CD8-positive, alpha-beta T cell (primary cell): ENCODE measurements at regions of chr12 and their contacts with region 1.

Region 1: DNA sequence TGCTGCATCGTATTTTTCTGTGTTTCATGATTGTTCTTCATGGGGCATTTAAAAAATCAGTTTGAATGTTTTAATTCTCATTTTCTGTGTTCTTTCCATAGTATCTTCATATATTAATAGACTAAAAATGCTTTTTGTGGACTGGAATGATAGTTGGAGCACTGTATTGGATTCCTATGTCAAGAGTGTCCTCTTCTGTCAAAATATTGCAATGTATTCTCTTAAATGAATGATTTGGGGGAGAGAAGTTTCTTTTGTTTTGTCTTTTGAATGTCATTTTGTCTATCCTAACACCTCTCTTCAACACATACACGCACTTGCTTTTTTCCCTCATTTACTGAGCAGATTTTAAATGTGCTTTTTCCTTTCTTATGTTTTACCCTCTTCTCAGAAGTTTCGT is 4.7 kb upstream of the EIF2S3B start:
- DNase-seq: peak in 2 of 9 experiments; percentile 36 to 59
- ATAC-seq: no peak
- H3K4me3 ChIP-seq: no peak overlapping the region
- H3K4me3 Mint-ChIP-seq: peak overlapping the region; percentile 57
- H3K27ac ChIP-seq: no peak overlapping the region
- H3K27ac Mint-ChIP-seq: peak overlapping the region; percentile 82
- H3K4me1 ChIP-seq: peaks cover 56% of the 10 kb centered on the region
- H3K4me1 Mint-ChIP-seq: peaks cover 51% of the 10 kb centered on the region
- H3K27me3 ChIP-seq: no peaks in the 10 kb centered on the region
- H3K27me3 Mint-ChIP-seq: no peaks in the 10 kb centered on the region
- CTCF ChIP-seq: no peak

Region 2: DNA sequence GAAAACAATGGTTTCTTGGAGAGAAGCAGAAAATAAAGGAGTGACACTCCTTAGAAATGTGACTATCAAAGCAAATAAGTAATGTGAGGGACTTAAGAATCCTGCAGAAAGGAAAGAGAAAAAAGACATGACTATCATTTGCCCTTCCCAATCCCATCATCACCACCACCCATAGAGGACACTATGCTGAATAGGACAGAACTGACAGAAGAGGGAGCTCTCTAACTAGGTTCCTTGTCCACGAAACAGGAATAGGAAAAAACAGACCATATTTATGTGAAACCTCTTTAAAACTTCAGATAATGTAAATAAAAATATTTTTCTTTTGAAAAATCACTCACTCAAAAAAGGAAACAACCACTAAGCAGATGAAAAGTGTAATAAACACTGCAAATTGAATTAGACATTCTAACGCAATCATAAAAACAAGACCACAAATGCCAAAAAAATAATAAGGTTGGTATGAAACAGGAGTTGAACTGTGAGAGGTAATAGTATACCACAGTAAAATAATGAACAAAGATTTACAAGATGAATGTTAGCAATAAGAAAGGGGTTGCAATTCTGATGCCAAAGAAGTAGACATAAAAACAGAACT is 169.3 kb before region 1 on chr12:
- CTCF ChIA-PET with region 1: interaction called, 4 read pairs
- POLR2A ChIA-PET with region 1: no interaction called
- intact Hi-C with region 1: loop called in 1 of 2 experiments (anchors 1 kb)
- DNase-seq: peak in 3 of 9 experiments; percentile 8 to 77 (median 63)
- ATAC-seq: no peak
- H3K4me3 ChIP-seq: no peak overlapping the region
- H3K4me3 Mint-ChIP-seq: peak overlapping the region; percentile 26
- H3K27ac ChIP-seq: no peak overlapping the region
- H3K27ac Mint-ChIP-seq: no peak overlapping the region
- H3K4me1 ChIP-seq: peaks cover 6% of the 10 kb centered on the region
- H3K4me1 Mint-ChIP-seq: peaks cover 10% of the 10 kb centered on the region
- H3K27me3 ChIP-seq: no peaks in the 10 kb centered on the region
- H3K27me3 Mint-ChIP-seq: no peaks in the 10 kb centered on the region
- CTCF ChIP-seq: peak; percentile 51

Region 3: DNA sequence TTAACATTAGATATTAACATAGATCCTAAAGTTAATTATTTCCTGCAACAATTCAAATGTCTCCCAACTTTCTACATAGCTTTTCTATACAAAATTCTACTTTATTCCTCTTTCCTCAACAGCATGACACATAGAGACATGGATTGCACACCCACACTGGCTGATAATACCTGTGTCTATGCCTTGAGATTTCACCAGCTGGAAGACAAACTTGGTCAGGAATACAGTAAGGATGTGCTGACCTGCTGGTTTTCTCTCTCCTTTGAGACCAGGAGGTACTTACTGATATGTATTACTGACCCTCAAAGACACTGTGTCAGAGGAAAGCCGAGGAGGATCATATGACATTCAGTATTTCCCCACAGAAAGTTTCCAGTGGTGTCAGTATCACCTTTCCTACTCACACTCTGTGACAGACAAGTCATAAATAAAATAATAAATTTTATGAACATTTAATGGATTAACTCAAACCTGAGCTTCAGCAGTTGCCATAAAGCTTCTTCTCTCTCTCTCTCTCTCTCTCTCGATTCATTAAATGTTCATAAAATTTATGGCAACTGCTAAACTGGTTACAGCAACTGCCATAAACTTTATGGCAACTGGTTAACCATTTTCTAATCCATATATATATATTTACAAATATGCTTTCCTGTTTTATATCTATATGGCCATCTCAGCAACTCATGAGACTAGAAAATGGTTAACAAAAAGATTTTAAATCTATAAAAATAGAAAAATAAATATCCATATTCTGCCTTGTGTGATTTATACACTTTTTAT is 27.3 kb after region 1 on chr12:
- CTCF ChIA-PET with region 1: no interaction called
- POLR2A ChIA-PET with region 1: no interaction called
- intact Hi-C with region 1: loop called in 1 of 2 experiments (anchors 1 kb)
- DNase-seq: no peak
- ATAC-seq: no peak
- H3K4me3 ChIP-seq: no peak overlapping the region
- H3K4me3 Mint-ChIP-seq: no peak overlapping the region
- H3K27ac ChIP-seq: no peak overlapping the region
- H3K27ac Mint-ChIP-seq: no peak overlapping the region
- H3K4me1 ChIP-seq: peaks cover 6% of the 10 kb centered on the region
- H3K4me1 Mint-ChIP-seq: peaks cover 12% of the 10 kb centered on the region
- H3K27me3 ChIP-seq: no peaks in the 10 kb centered on the region
- H3K27me3 Mint-ChIP-seq: no peaks in the 10 kb centered on the region
- CTCF ChIP-seq: no peak

Region 4: DNA sequence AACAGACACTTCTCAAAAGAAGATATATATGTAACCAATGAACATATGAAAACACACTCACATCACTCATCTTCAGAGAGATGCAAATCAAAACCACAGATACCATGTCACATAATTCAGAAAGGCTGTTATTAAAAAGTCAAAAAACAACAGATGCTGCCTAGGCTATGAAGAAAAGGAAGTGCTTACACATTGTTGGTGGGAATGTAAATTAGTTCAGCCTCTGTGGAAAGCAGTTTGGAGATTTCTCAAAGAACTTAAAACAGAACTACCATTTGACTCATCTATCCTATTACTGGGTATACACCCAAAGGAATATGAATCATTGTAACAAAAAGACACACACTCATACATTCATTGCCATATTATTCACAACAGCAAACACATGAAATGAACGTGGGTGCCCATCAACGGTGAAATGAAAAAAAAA is 39.8 kb after region 1 on chr12:
- CTCF ChIA-PET with region 1: no interaction called
- POLR2A ChIA-PET with region 1: interaction called, 3 read pairs
- intact Hi-C with region 1: loop called in 1 of 2 experiments (anchors 5 kb)
- DNase-seq: peak in 1 of 9 experiments; percentile 51
- ATAC-seq: peak; percentile 85
- H3K4me3 ChIP-seq: no peak overlapping the region
- H3K4me3 Mint-ChIP-seq: no peak overlapping the region
- H3K27ac ChIP-seq: no peak overlapping the region
- H3K27ac Mint-ChIP-seq: peak overlapping the region; percentile 79
- H3K4me1 ChIP-seq: peaks cover 9% of the 10 kb centered on the region
- H3K4me1 Mint-ChIP-seq: peaks cover 53% of the 10 kb centered on the region
- H3K27me3 ChIP-seq: no peaks in the 10 kb centered on the region
- H3K27me3 Mint-ChIP-seq: no peaks in the 10 kb centered on the region
- CTCF ChIP-seq: no peak

Region 5: DNA sequence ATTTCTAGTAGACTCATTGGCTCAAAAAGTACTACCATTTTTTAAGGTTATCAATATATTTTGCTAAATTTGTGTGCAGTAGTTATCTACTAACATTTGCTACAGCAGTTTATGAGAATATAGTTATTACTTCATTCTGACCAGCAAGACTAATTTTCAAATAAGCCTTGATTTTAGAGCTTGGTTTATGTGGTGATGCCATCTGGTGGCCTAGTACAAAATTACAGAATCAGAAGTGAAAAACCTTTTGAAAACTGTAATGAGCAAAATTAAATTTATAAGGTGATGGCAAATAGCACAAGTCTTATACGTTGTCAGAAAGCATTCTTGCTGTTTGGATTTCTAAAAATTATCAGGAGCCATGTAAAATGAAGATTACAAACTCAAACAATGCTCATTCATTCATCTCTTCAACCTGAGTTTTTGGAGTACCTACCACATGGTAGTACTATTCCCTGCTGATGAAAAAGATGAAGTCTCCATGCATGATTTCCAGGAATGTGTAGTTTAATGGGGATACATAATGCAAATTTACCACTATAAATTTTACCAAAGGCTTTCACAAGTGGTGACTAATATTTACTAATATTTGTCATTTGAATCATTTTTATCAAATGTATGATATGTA is 61.4 kb after region 1 on chr12:
- CTCF ChIA-PET with region 1: interaction called, 7 read pairs
- POLR2A ChIA-PET with region 1: no interaction called
- intact Hi-C with region 1: loop called (anchors 1 to 2 kb)
- DNase-seq: peak in 4 of 9 experiments; percentile 29 to 79 (median 62)
- ATAC-seq: no peak
- H3K4me3 ChIP-seq: no peak overlapping the region
- H3K4me3 Mint-ChIP-seq: peak overlapping the region; percentile 11
- H3K27ac ChIP-seq: no peak overlapping the region
- H3K27ac Mint-ChIP-seq: peak overlapping the region; percentile 80
- H3K4me1 ChIP-seq: peaks cover 70% of the 10 kb centered on the region
- H3K4me1 Mint-ChIP-seq: peaks cover 83% of the 10 kb centered on the region
- H3K27me3 ChIP-seq: no peaks in the 10 kb centered on the region
- H3K27me3 Mint-ChIP-seq: no peaks in the 10 kb centered on the region
- CTCF ChIP-seq: peak; percentile 98